ENCODE measurements at regions of chr9 and their contacts with region 1.

Region 1: DNA sequence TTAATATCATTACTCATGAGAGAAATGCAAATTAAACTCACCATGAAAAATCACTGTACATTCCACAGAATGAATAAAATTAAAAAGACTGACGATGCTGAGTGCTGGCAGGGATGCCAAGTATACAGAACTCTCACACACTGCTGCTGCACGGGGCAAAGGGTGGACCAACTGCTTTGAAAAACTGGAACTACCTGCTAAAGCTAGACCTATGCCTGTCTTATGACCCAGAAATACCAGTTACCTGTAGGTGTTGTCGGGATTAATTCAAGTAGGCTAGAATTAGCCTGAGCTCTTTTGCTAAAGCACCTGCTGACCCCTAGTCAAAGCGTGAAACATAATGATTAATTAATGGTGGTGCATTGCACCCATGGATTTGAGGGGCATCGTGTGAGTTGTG is 36.5 kb upstream of the ANKRD18A start:
- DNase-seq: no peak
- H3K4me3 ChIP-seq: no peak overlapping the region
- H3K27ac ChIP-seq: no peak overlapping the region
- H3K27me3 ChIP-seq: no peaks in the 10 kb centered on the region
- CTCF ChIP-seq: no peak

Region 2: GRCh38 chr9:38694676-38695075 is 37.8 kb after region 1 on chr9:
- intact Hi-C with region 1: loop called in 1 of 2 experiments (anchors 5 kb)
- DNase-seq: peak in 9 of 10 donors; percentile 45 to 83 (median 68)
- H3K4me3 ChIP-seq: peak overlapping the region in 2 of 59 donors; percentile 4 to 13
- H3K27ac ChIP-seq: peak overlapping the region in 50 of 59 donors; percentile 3 to 91 (median 68)
- H3K27me3 ChIP-seq: peaks cover 0 to 3% (median 0%) of the 10 kb centered on the region in 45 donors
- CTCF ChIP-seq: peak in 2 of 56 donors; percentile 7 to 23